ENCODE measurements at regions of chr13 and their contacts with region 1.

Region 1: GRCh38 chr13:111281751-111282311 is 38.6 kb upstream of the TEX29 start:
- DNase-seq: peak in 1 of 2 donors; percentile 71
- H3K4me3 ChIP-seq: no peak overlapping the region
- H3K27ac ChIP-seq: peak overlapping the region; percentile 89 to 93
- H3K4me1 ChIP-seq: peaks cover 7 to 35% of the 10 kb centered on the region in 2 donors
- H3K27me3 ChIP-seq: no peaks in the 10 kb centered on the region
- CTCF ChIP-seq: peak in 1 of 3 experiments; percentile 19

Region 2: DNA sequence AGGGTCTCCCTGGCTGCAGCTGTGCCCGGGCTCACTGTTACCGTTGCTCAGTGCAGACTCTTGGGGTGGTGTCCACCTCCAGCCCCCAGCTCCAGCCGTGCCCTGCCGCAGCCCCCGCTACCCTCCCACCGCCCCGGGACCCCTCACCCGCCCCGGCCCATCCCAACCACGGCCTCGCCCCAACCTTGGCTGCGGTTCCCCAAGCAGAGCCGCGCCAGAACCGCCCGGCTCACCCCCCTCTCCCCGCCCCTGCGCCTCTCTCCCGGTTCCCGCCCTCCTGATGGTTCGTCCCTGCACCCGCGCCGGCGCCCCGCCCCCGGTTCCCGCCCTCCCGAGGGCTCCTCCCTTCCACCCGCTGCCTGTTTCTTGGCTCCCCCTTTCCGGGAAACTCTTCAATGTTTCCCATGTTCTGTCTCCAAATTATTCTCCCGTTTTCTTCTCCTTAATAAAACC is 407.3 kb before region 1 on chr13:
- intact Hi-C with region 1: loop called (anchors 5 kb)
- DNase-seq: peak; percentile 50 to 93
- H3K4me3 ChIP-seq: peak overlapping the region; percentile 49 to 61
- H3K27ac ChIP-seq: peak overlapping the region in 1 of 2 donors; percentile 53
- H3K4me1 ChIP-seq: peaks cover 11 to 20% of the 10 kb centered on the region in 2 donors
- H3K27me3 ChIP-seq: no peaks in the 10 kb centered on the region
- CTCF ChIP-seq: no peak

Region 3: GRCh38 chr13:111017755-111018459 is 263.9 kb before region 1 on chr13:
- intact Hi-C with region 1: no loop called
- DNase-seq: no peak
- H3K4me3 ChIP-seq: no peak overlapping the region
- H3K27ac ChIP-seq: no peak overlapping the region
- H3K4me1 ChIP-seq: no peaks in the 10 kb centered on the region
- H3K27me3 ChIP-seq: no peaks in the 10 kb centered on the region
- CTCF ChIP-seq: no peak

Region 4: GRCh38 chr13:111066544-111066943 is 215.3 kb before region 1 on chr13:
- intact Hi-C with region 1: loop called (anchors 5 kb)
- DNase-seq: no peak
- H3K4me3 ChIP-seq: no peak overlapping the region
- H3K27ac ChIP-seq: no peak overlapping the region
- H3K4me1 ChIP-seq: no peaks in the 10 kb centered on the region
- H3K27me3 ChIP-seq: no peaks in the 10 kb centered on the region
- CTCF ChIP-seq: no peak

Region 5: GRCh38 chr13:111114362-111115060 is 167.3 kb before region 1 on chr13:
- intact Hi-C with region 1: loop called (anchors 2 kb)
- DNase-seq: peak in 1 of 2 donors; percentile 89
- H3K4me3 ChIP-seq: peak overlapping the region; percentile 80 to 86
- H3K27ac ChIP-seq: peak overlapping the region; percentile 89 to 95
- H3K4me1 ChIP-seq: peaks cover 3 to 25% of the 10 kb centered on the region in 2 donors
- H3K27me3 ChIP-seq: no peaks in the 10 kb centered on the region
- CTCF ChIP-seq: no peak

Region 6: DNA sequence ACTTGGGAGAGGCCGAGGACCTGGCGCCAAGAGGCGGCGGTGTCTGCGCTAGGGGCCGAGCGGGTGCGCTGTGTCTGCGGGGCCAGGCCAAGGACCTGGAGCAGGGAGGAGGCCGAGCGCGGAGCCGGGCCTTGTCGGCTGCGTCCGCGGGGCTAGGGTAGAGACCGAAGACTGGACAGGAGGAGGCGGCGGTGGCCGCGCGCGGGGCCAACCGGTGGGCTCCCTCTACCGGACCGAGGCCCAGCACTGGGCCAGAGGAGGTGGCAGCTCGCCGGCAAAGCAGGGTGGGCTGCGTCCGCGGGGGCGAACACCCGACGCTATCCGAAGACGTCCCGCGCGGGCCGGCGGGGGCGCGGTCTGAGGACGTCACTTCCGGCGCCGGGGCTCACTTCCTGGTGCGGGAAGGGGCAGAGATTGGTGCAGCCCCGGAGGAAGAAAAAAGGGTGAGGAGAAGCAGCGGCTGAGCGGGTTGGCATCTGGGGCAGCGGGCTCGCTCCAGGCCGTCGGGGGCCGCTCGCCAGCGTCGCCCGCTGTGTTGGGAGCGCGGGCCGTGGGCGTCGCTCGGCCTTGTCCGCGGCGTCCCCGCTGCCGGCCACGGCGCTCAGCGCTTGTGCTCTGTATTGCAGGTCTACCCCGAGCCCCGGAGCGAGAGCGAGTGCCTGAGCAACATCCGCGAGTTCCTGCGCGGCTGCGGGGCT is 128.4 kb before region 1 on chr13:
- intact Hi-C with region 1: loop called (anchors 1 kb)
- DNase-seq: peak; percentile 64 to 96
- H3K4me3 ChIP-seq: peak overlapping the region; percentile 66 to 89
- H3K27ac ChIP-seq: peak overlapping the region; percentile 99
- H3K4me1 ChIP-seq: peaks cover 2 to 36% of the 10 kb centered on the region in 2 donors
- H3K27me3 ChIP-seq: no peaks in the 10 kb centered on the region
- CTCF ChIP-seq: peak in 2 of 3 experiments; percentile 7 to 33

Region 7: GRCh38 chr13:111216166-111216960 is 65.5 kb before region 1 on chr13:
- intact Hi-C with region 1: loop called (anchors 2 kb)
- DNase-seq: peak in 1 of 2 donors; percentile 69
- H3K4me3 ChIP-seq: peak overlapping the region in 1 of 2 donors; percentile 24
- H3K27ac ChIP-seq: peak overlapping the region; percentile 77 to 82
- H3K4me1 ChIP-seq: peaks cover 12 to 69% of the 10 kb centered on the region in 2 donors
- H3K27me3 ChIP-seq: no peaks in the 10 kb centered on the region
- CTCF ChIP-seq: peak; percentile 35 to 74 (median 49)

Region 8: GRCh38 chr13:111228262-111229144 is 53.3 kb before region 1 on chr13:
- intact Hi-C with region 1: loop called (anchors 2 kb)
- DNase-seq: peak; percentile 24 to 92
- H3K4me3 ChIP-seq: peak overlapping the region in 1 of 2 donors; percentile 18
- H3K27ac ChIP-seq: peak overlapping the region; percentile 50 to 56
- H3K4me1 ChIP-seq: peaks cover 2 to 25% of the 10 kb centered on the region in 2 donors
- H3K27me3 ChIP-seq: no peaks in the 10 kb centered on the region
- CTCF ChIP-seq: no peak